AG04450 (cell line): ENCODE measurements at regions of chr16 and their contacts with region 1.

Region 1: DNA sequence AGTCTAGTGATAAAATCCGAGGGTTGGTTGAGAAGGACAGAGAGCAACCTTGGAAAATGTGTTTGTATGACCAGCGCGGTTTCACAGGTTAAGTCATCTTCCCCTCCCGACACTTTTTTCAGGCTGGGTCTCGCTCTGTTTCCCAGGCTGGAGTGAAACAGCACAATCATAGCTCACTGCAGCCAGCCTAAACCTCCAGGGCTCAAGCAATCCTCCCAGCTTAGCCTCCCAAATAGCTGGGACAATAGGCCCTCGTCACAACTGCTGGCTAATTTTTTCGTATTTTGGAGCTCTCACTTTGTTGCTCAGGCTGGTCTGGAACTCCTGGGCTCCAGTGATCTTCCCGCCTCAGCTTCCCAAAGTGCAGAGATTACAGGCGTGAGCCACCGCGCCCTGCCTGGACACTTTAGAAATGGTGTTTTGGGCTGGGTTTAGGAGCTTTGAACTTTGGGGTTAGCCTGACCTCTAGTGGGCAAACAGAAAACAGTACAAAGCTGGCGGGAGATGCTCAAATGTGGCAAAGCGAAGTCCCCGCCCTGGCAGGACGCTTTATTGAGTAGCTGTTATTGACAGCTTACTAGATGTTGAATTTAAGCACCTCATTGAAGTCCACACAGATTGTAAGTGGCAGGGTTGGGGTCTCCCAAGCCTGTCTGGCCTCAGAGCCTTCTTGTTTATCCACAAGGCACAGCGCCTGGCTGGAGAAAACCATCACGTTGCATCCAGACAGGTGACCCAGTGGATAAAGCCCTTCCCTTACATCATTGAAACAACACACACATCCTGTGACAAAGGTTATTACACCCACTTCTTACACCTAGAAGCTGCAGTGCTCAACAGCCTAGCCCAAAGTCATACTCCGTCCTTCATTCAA is 34.7 kb upstream of the RBBP6 start:
- DNase-seq: peak; percentile 16
- H3K4me3 ChIP-seq: no peak overlapping the region
- H3K27ac ChIP-seq: no peak overlapping the region
- H3K27me3 ChIP-seq: peaks cover 3% of the 10 kb centered on the region
- CTCF ChIP-seq: peak; percentile 75

Region 2: DNA sequence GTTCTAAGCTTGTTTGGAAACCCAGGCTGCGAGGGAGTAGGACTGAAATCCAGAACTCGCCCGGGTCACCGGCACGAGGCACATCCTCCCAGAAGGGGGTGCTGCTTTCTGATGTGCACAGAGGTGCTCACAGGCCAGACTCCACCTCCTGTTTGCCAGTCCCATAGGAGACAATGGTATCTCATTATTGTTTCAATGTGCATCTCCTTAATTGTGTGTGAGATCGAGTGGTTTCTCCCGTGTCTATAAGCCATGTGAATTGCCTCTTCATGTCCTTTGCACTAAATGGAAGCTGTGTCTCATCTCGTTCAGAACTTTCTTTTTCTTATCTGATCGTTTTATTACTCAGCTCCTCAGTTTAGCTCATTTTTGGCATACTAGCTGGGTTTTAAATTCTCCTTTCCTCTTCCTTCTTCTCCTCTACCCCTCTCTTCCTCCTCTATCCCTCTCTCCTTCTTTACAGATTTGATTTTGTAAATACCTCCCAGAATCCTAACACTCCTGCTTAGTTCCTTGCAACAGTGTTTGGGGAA is 701.1 kb before region 1 on chr16:
- CTCF ChIA-PET with region 1: interaction called, 15 read pairs
- POLR2A ChIA-PET with region 1: interaction called, 4 read pairs
- DNase-seq: no peak
- H3K4me3 ChIP-seq: no peak overlapping the region
- H3K27ac ChIP-seq: no peak overlapping the region
- H3K27me3 ChIP-seq: peaks cover 5% of the 10 kb centered on the region
- CTCF ChIP-seq: peak; percentile 53

Region 3: DNA sequence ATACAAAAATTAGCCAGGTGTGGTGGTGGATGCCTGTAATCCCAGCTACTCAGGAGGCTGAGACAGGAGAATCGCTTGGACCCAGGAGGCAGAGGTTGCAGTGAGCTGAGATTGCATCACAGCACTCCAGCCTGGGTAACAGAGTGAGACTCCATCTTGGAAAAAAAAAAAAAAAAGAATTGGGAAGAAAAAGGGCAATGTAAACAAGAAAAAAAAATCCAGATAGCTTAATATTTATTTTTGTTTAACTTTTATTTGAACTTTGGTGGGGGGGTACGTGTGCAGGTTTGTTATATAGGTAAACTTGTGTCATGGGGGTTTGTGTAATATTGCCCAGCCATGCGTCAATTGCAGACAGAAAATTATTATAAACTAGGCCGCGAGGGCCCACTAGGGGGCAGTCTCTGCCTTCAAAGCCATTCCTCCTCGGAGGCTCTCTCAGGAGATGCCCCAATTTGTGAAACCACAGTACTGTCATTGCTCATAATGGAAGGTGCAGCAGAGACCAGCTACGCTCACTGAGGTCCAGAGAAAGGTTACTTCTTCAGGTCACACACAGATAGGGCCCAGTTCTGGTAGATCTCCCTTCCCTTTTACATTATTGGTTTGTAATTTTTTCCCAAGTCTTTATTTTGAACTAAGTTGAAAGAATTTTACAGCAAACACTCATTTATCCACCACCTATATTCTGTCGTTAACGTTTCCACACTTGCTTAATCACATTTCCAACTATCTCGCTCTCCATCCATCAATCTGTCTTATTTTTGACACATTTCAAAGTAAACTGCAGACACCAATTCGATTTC is 462.7 kb before region 1 on chr16:
- CTCF ChIA-PET with region 1: interaction called, 133 read pairs
- POLR2A ChIA-PET with region 1: no interaction called
- DNase-seq: peak; percentile 11
- H3K4me3 ChIP-seq: no peak overlapping the region
- H3K27ac ChIP-seq: no peak overlapping the region
- H3K27me3 ChIP-seq: no peaks in the 10 kb centered on the region
- CTCF ChIP-seq: peak; percentile 78

Region 4: DNA sequence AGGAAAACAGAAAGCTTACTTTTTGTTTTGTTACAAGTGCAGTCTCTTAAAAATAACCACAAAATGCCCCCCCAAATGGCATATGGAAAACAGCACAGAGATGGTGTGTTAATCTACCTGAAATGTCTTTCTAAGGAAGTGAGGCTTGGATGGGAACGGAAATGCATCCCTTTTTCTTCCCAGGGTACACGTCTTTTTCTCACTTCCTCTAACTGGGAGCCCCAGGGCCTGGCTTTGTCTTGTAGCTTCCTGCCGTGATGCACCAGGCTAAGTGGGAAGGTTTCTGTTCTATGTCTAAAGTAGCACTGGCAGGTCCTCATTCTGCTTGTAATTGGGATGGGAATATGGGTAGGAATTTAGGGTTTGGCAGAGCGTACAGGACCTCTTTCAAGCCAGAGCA is 301.0 kb before region 1 on chr16:
- CTCF ChIA-PET with region 1: no interaction called
- POLR2A ChIA-PET with region 1: no interaction called
- DNase-seq: no peak
- H3K4me3 ChIP-seq: no peak overlapping the region
- H3K27ac ChIP-seq: no peak overlapping the region
- H3K27me3 ChIP-seq: no peaks in the 10 kb centered on the region
- CTCF ChIP-seq: no peak

Region 5: DNA sequence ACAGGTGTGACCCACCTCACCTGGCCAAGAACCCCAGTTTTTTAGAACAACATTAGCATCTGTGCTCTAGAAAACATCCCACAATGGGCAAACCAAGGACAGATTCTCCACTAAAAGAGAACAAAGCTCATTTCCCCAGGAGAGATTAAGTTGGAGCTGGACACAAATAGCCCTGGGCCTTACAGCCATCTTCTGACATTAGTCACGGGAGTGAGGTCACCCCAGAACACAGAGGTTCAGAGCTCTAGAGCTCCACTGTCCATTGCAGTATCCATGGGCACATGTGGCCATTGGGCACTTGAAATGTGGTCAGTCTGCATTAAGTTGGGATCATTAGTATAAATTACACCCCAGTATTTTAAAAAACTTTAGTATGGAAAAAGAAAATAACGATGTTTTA is 13.0 kb before region 1 on chr16:
- CTCF ChIA-PET with region 1: interaction called, 10 read pairs
- POLR2A ChIA-PET with region 1: no interaction called
- DNase-seq: no peak
- H3K4me3 ChIP-seq: no peak overlapping the region
- H3K27ac ChIP-seq: no peak overlapping the region
- H3K27me3 ChIP-seq: no peaks in the 10 kb centered on the region
- CTCF ChIP-seq: no peak

Region 6: DNA sequence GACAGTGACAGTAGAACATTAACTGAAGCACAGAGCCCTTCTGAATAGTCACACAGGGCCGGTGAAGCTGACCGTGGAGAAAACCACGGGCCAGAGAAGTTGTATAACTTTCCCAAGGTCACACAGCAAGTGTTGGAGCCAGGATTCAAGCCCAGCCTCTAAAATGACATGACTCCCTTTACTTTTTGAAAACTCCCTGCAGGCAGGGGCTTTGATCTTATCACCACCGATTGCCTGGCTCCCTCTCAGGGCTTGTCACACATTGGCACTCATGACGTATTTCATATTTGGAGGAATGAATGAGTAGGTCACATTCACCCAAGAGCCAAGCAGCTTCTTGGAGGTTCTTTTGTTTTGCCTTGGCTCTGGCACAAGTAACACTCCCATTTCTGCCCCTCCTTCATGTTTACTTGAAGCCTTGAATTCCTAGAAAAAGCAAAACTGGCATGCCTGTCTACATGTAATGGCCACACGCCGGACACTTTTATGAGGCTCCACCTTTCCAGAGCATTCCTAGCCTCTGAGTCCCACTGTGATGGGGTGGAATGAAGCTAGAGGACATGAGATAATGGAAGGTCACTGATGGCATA is 21.4 kb after region 1 on chr16:
- CTCF ChIA-PET with region 1: interaction called, 11 read pairs
- POLR2A ChIA-PET with region 1: no interaction called
- DNase-seq: no peak
- H3K4me3 ChIP-seq: no peak overlapping the region
- H3K27ac ChIP-seq: no peak overlapping the region
- H3K27me3 ChIP-seq: no peaks in the 10 kb centered on the region
- CTCF ChIP-seq: no peak